T-cell (primary cell): ENCODE measurements at regions of chr3 and their contacts with region 1.

Region 1: DNA sequence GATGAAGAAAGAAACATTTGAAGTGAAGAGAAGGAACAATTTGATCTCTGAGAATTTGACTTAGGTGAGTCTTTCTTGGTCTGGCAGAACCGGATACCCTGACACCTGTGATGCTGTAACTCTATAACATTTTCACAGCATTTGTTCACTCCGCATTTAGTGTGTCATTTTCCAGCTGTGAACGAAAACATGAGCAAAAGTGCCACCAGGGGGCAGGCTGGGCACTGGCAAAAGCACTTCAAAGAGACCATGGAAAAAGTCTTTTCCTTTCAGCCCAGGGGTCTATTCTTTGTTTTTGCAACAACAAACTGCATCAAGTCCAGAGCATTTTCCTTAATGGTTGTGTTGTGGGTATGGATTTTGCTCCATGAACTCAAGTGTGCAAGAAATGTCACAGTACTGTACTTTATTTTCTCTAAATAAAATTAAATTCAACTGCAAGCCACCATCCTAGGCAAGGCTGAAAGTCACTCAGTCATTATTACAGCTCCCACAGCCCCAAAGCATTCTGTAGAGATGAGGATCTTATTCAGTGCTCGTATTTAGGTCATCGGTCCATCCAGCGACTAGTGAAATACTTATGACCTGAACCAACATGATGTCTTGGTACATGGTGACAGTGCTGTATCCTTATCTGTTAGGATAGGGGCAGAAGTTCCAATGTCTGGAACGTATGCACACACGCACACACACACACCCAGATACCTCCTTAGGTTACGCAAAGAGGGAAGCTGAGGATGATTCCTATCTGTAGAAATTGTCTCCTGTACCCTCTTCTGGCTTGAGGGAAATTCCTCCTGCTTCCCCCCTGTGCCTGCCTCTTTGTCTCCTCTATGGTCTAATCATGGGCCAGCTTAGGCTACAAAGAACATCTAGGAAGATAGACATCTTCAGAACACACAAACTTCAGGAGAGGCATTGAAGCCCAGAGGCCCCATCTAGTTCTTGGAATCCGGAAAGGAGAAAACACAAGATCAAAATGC is 125.5 kb downstream of the GADL1 start:
- DNase-seq: peak; percentile 27 to 76 (median 58)
- ATAC-seq: peak in 2 of 4 experiments; percentile 37 to 50
- H3K4me3 ChIP-seq: no peak overlapping the region
- H3K4me3 Mint-ChIP-seq: no peak overlapping the region
- H3K27ac ChIP-seq: no peak overlapping the region
- H3K27ac Mint-ChIP-seq: no peak overlapping the region
- H3K4me1 ChIP-seq: no peaks in the 10 kb centered on the region
- H3K4me1 Mint-ChIP-seq: peaks cover 3 to 9% (median 3%) of the 10 kb centered on the region in 3 donors
- H3K27me3 ChIP-seq: no peaks in the 10 kb centered on the region
- H3K27me3 Mint-ChIP-seq: peaks cover 0 to 4% of the 10 kb centered on the region in 2 donors

Region 2: GRCh38 chr3:30779686-30780287 is 10.8 kb after region 1 on chr3:
- CTCF ChIA-PET with region 1: interaction called, 4 to 11 read pairs
- POLR2A ChIA-PET with region 1: no interaction called
- DNase-seq: peak in 1 of 35 experiments; percentile 6
- ATAC-seq: no peak
- H3K4me3 ChIP-seq: no peak overlapping the region
- H3K4me3 Mint-ChIP-seq: no peak overlapping the region
- H3K27ac ChIP-seq: no peak overlapping the region
- H3K27ac Mint-ChIP-seq: no peak overlapping the region
- H3K4me1 ChIP-seq: no peaks in the 10 kb centered on the region
- H3K4me1 Mint-ChIP-seq: no peaks in the 10 kb centered on the region
- H3K27me3 ChIP-seq: peaks cover 0 to 5% of the 10 kb centered on the region in 2 experiments
- H3K27me3 Mint-ChIP-seq: peaks cover 0 to 2% of the 10 kb centered on the region in 2 donors

Region 3: DNA sequence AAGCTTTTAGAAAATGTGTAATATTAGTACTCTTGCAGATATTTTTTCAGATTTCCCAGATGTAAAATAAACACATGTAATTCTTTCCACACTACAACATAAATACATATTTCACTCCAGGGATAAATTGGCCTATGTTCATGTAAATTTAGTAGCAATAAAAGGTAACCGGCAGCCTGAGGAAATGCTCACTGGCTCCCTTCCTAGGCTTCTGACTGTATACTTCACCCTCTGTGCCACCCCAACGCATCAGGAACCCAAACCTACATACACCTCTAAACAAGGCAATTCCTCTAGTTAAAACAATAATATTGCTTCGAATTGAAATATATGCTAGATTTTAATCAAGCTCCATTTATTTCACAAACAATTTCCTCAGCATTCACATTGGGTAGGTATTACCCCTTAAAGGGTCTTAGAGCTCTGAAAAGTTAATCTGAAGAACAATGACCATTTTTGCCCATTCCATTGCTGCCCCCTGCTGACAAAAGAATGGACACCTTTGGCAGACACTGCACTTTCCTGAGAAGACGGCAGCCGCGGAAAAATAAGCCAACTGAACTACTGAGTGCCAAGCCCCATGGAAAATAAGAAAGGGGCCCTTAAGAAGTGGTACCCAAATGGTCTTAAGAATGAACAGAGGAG is 999.6 kb after region 1 on chr3:
- CTCF ChIA-PET with region 1: interaction called, 5 to 22 read pairs
- POLR2A ChIA-PET with region 1: no interaction called
- DNase-seq: peak in 30 of 35 experiments; percentile 7 to 68 (median 28)
- ATAC-seq: peak in 1 of 4 experiments; percentile 27
- H3K4me3 ChIP-seq: no peak overlapping the region
- H3K4me3 Mint-ChIP-seq: no peak overlapping the region
- H3K27ac ChIP-seq: no peak overlapping the region
- H3K27ac Mint-ChIP-seq: no peak overlapping the region
- H3K4me1 ChIP-seq: no peaks in the 10 kb centered on the region
- H3K4me1 Mint-ChIP-seq: peaks cover 2 to 5% (median 2%) of the 10 kb centered on the region in 3 donors
- H3K27me3 ChIP-seq: no peaks in the 10 kb centered on the region
- H3K27me3 Mint-ChIP-seq: peaks cover 0 to 2% of the 10 kb centered on the region in 2 donors